ENCODE measurements at regions of chr6 and their contacts with region 1.

Region 1: DNA sequence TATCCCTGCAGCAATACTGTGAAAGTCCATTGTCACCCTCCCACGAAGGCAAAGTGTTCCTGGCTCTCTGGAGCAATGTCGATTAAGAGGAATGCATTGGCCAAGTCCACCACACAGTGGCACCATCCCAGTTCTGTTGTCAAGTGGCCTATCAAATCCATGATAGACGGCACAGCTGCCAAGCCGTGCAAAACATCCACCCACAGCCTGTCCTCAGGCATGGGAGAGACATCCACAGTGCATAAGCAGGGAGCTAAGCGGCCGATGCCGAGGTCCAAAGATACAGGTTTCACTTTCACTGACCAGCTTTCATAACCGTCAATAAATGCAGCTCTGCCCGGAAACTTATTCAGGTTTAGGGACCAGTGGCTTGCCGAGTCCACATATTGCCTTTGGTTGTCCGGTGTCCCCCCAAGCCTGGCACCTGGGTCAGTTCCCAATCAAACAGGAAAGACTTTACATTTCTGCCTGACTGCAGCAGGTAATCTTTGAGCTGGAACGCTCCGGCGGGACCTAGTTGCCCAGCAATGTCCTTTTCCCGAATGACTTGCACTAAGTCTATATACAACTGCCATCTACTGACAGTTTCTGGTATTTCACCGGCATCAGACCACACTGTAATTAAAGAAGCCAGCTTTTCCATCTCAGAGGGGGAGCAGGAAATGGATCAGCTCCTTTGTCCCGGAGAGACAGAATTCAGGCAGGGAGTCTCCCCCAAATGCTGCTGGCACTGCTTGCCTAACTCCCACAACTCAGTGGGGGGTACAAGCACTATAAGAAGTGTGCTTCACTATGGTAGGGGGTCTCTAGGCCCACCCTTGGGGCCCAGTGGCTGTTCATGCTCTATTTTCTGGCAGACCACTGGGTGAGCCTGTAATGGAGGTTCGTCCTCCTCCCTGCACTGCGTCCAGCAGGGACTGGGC is 6.3 kb downstream of the ZKSCAN3 start:
- DNase-seq: peak; percentile 75
- ATAC-seq: peak; percentile 78
- H3K4me3 ChIP-seq: peak overlapping the region; percentile 58 to 76
- H3K27ac ChIP-seq: peak overlapping the region; percentile 97
- H3K4me1 ChIP-seq: peaks cover 42% of the 10 kb centered on the region
- H3K27me3 ChIP-seq: no peaks in the 10 kb centered on the region
- CTCF ChIP-seq: peak; percentile 80

Region 2: GRCh38 chr6:27902335-27903314 is 453.4 kb before region 1 on chr6:
- CTCF ChIA-PET with region 1: no interaction called
- POLR2A ChIA-PET with region 1: no interaction called
- in situ Hi-C with region 1: no loop called
- intact Hi-C with region 1: loop called (anchors 10 kb)
- DNase-seq: no peak
- ATAC-seq: peak; percentile 93
- H3K4me3 ChIP-seq: peak overlapping the region; percentile 70 to 78
- H3K27ac ChIP-seq: peak overlapping the region; percentile 85
- H3K4me1 ChIP-seq: peaks cover 7% of the 10 kb centered on the region
- H3K27me3 ChIP-seq: no peaks in the 10 kb centered on the region
- CTCF ChIP-seq: no peak

Region 3: GRCh38 chr6:28218271-28219248 is 137.4 kb before region 1 on chr6:
- CTCF ChIA-PET with region 1: interaction called, 6 read pairs
- POLR2A ChIA-PET with region 1: no interaction called
- in situ Hi-C with region 1: no loop called
- intact Hi-C with region 1: loop called (anchors 2 kb)
- DNase-seq: no peak
- ATAC-seq: peak; percentile 90
- H3K4me3 ChIP-seq: peak overlapping the region; percentile 55 to 77
- H3K27ac ChIP-seq: peak overlapping the region; percentile 92
- H3K4me1 ChIP-seq: peaks cover 33% of the 10 kb centered on the region
- H3K27me3 ChIP-seq: no peaks in the 10 kb centered on the region
- CTCF ChIP-seq: no peak

Region 4: GRCh38 chr6:28266962-28267694 is 88.9 kb before region 1 on chr6 and contains the start of gene ZSCAN26:
- CTCF ChIA-PET with region 1: interaction called, 11 read pairs
- POLR2A ChIA-PET with region 1: no interaction called
- in situ Hi-C with region 1: no loop called
- intact Hi-C with region 1: loop called (anchors 5 kb)
- DNase-seq: peak; percentile 78
- ATAC-seq: peak; percentile 98
- H3K4me3 ChIP-seq: peak within 1 kb of the TSS; percentile 73 to 83
- H3K27ac ChIP-seq: peak within 1 kb of the TSS; percentile 95
- H3K4me1 ChIP-seq: peaks cover 16% of the 10 kb centered on the region; the same call in 1 of the 2 replicates
- H3K27me3 ChIP-seq: no peaks in the 10 kb centered on the region
- CTCF ChIP-seq: no peak
- total RNA-seq, gene ZSCAN26: 6.6 TPM

Region 5: GRCh38 chr6:28371706-28372451 is 15.9 kb after region 1 on chr6:
- CTCF ChIA-PET with region 1: no interaction called
- POLR2A ChIA-PET with region 1: interaction called, 19 read pairs
- in situ Hi-C with region 1: no loop called
- intact Hi-C with region 1: no loop called
- DNase-seq: no peak
- ATAC-seq: no peak
- H3K4me3 ChIP-seq: no peak overlapping the region
- H3K27ac ChIP-seq: no peak overlapping the region
- H3K4me1 ChIP-seq: no peaks in the 10 kb centered on the region
- H3K27me3 ChIP-seq: no peaks in the 10 kb centered on the region
- CTCF ChIP-seq: no peak

Region 6: GRCh38 chr6:28377879-28378278 is 21.9 kb after region 1 on chr6:
- CTCF ChIA-PET with region 1: interaction called, 8 read pairs
- POLR2A ChIA-PET with region 1: interaction called, 11 read pairs
- in situ Hi-C with region 1: no loop called
- intact Hi-C with region 1: no loop called
- DNase-seq: no peak
- ATAC-seq: no peak
- H3K4me3 ChIP-seq: no peak overlapping the region
- H3K27ac ChIP-seq: no peak overlapping the region
- H3K4me1 ChIP-seq: peaks cover 6% of the 10 kb centered on the region; the same call in 1 of the 2 replicates
- H3K27me3 ChIP-seq: no peaks in the 10 kb centered on the region
- CTCF ChIP-seq: no peak

Region 7: GRCh38 chr6:28474441-28475219 is 118.6 kb after region 1 on chr6:
- CTCF ChIA-PET with region 1: no interaction called
- POLR2A ChIA-PET with region 1: no interaction called
- in situ Hi-C with region 1: no loop called
- intact Hi-C with region 1: no loop called
- DNase-seq: peak; percentile 92
- ATAC-seq: peak; percentile 99
- H3K4me3 ChIP-seq: peak overlapping the region; percentile 57 to 73
- H3K27ac ChIP-seq: no peak overlapping the region
- H3K4me1 ChIP-seq: peaks cover 8% of the 10 kb centered on the region; the same call in 1 of the 2 replicates
- H3K27me3 ChIP-seq: peaks cover 2% of the 10 kb centered on the region; the same call in 1 of the 2 replicates
- CTCF ChIP-seq: no peak

Measured in Panc1 (cell line).